ENCODE measurements at regions of chr3 and their contacts with region 1.

Region 1: GRCh38 chr3:109081746-109082510 is 36.0 kb downstream of the MORC1 start:
- DNase-seq: peak in 5 of 35 experiments; percentile 0 to 51 (median 2)
- ATAC-seq: no peak
- H3K4me3 ChIP-seq: no peak overlapping the region
- H3K4me3 Mint-ChIP-seq: no peak overlapping the region
- H3K27ac ChIP-seq: no peak overlapping the region
- H3K27ac Mint-ChIP-seq: no peak overlapping the region
- H3K4me1 ChIP-seq: no peaks in the 10 kb centered on the region
- H3K4me1 Mint-ChIP-seq: no peaks in the 10 kb centered on the region
- H3K27me3 ChIP-seq: peaks cover 0 to 7% of the 10 kb centered on the region in 2 experiments
- H3K27me3 Mint-ChIP-seq: peaks cover 15 to 28% of the 10 kb centered on the region in 2 donors

Region 2: GRCh38 chr3:108461661-108462111 is 620.2 kb before region 1 on chr3:
- CTCF ChIA-PET with region 1: no interaction called
- POLR2A ChIA-PET with region 1: no interaction called
- DNase-seq: no peak
- ATAC-seq: no peak
- H3K4me3 ChIP-seq: no peak overlapping the region
- H3K4me3 Mint-ChIP-seq: no peak overlapping the region
- H3K27ac ChIP-seq: no peak overlapping the region
- H3K27ac Mint-ChIP-seq: no peak overlapping the region
- H3K4me1 ChIP-seq: no peaks in the 10 kb centered on the region
- H3K4me1 Mint-ChIP-seq: no peaks in the 10 kb centered on the region
- H3K27me3 ChIP-seq: no peaks in the 10 kb centered on the region
- H3K27me3 Mint-ChIP-seq: peaks cover 0 to 4% of the 10 kb centered on the region in 2 donors

Region 3: GRCh38 chr3:109023656-109024254 is 58.2 kb before region 1 on chr3:
- CTCF ChIA-PET with region 1: interaction called in 1 of 2 experiments, 10 read pairs
- POLR2A ChIA-PET with region 1: no interaction called
- DNase-seq: peak in 25 of 35 experiments; percentile 1 to 57 (median 11)
- ATAC-seq: no peak
- H3K4me3 ChIP-seq: no peak overlapping the region
- H3K4me3 Mint-ChIP-seq: no peak overlapping the region
- H3K27ac ChIP-seq: no peak overlapping the region
- H3K27ac Mint-ChIP-seq: no peak overlapping the region
- H3K4me1 ChIP-seq: no peaks in the 10 kb centered on the region
- H3K4me1 Mint-ChIP-seq: no peaks in the 10 kb centered on the region
- H3K27me3 ChIP-seq: peaks cover 0 to 5% of the 10 kb centered on the region in 2 experiments
- H3K27me3 Mint-ChIP-seq: peaks cover 4 to 5% of the 10 kb centered on the region in 2 donors